ENCODE measurements at regions of chr15 and their contacts with region 1.

Region 1: GRCh38 chr15:65355173-65355987 is 22.4 kb downstream of the IGDCC3 start:
- DNase-seq: peak in 9 of 10 donors; percentile 43 to 96 (median 72)

Region 2: GRCh38 chr15:65377104-65377975 is 22.0 kb after region 1 on chr15:
- intact Hi-C with region 1: loop called (anchors 1 kb)
- DNase-seq: peak in 9 of 10 donors; percentile 30 to 92 (median 37)